ENCODE measurements at regions of chr10 and their contacts with region 1.

Region 1: DNA sequence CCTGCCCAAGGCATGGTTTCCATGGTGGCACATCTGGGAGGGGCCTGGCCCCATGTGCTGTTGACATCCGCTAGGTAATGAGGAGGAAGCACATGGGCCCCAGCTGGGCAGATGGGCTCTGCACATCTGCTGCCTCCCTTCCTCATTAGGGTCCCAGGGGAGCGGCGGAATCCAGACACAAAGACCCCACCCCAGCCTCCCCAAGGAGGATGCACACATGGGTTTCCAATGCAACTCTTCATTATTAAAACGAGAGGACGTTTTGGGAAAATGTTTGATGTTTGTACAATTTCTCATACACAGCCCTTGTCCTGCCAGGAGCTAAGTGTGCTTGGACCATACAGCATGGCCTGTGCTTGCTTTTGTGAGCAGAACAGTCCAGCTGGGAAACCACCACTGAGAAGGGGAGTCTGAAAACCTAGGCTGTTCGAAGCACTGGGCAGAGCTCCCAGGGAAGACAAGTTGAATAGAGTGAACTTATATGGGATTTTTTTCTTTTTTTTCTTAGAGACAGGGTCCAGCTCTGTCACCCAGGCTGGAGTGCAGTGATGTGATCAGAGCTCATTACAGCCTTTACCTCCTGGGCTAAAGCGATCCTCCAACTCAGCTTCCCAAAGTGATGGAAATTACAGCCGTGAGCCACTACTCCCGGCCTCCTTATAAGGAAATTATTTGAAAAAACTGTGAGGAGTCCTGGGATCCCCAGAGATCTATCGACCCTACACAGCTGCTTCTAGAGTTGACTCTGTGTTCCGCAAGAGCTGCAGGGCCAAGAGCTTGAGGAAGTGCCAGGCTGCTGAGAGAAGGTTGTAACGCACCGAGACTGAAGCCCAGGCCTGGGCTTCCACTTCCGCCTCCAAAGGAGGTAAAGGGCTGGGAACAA is 23.4 kb downstream of the FAM107B start:
- DNase-seq: peak; percentile 60
- ATAC-seq: peak; percentile 78
- H3K4me3 Mint-ChIP-seq: peak overlapping the region; percentile 70
- H3K27ac Mint-ChIP-seq: peak overlapping the region; percentile 97
- H3K4me1 Mint-ChIP-seq: peaks cover 71% of the 10 kb centered on the region
- H3K27me3 Mint-ChIP-seq: no peaks in the 10 kb centered on the region
- CTCF ChIP-seq: no peak

Region 2: GRCh38 chr10:14712991-14713497 is 38.2 kb before region 1 on chr10:
- CTCF ChIA-PET with region 1: no interaction called
- POLR2A ChIA-PET with region 1: no interaction called
- intact Hi-C with region 1: no loop called
- DNase-seq: no peak
- ATAC-seq: no peak
- H3K4me3 Mint-ChIP-seq: no peak overlapping the region
- H3K27ac Mint-ChIP-seq: no peak overlapping the region
- H3K4me1 Mint-ChIP-seq: no peaks in the 10 kb centered on the region
- H3K27me3 Mint-ChIP-seq: no peaks in the 10 kb centered on the region
- CTCF ChIP-seq: no peak

Region 3: GRCh38 chr10:14736600-14737081 is 14.6 kb before region 1 on chr10:
- CTCF ChIA-PET with region 1: interaction called, 3 read pairs
- POLR2A ChIA-PET with region 1: interaction called, 105 read pairs
- intact Hi-C with region 1: loop called (anchors 2 kb)
- DNase-seq: no peak
- ATAC-seq: peak; percentile 76
- H3K4me3 Mint-ChIP-seq: peak overlapping the region; percentile 73
- H3K27ac Mint-ChIP-seq: peak overlapping the region; percentile 98
- H3K4me1 Mint-ChIP-seq: peaks cover 76% of the 10 kb centered on the region
- H3K27me3 Mint-ChIP-seq: no peaks in the 10 kb centered on the region
- CTCF ChIP-seq: no peak

Region 4: DNA sequence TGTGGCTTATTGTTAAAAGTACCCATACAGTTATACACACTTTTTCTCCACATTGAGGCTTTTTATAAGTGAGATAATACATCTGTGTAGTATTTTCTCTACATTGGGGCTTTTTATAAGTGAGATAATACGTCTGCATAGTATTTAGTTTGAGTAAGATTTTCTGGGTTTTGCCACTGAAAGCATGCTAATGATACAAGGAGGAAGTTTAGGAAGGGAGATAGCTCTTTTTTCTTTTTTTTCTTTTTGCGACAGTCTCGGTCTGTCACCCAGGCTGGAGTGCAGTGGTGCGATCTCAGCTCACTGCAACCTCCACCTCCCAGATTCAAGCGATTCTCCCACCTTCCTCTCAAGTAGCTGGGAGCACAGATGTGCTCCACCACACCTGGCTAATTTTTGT is 10.1 kb after region 1 on chr10:
- CTCF ChIA-PET with region 1: no interaction called
- POLR2A ChIA-PET with region 1: interaction called, 13 read pairs
- intact Hi-C with region 1: no loop called
- DNase-seq: no peak
- ATAC-seq: peak; percentile 87
- H3K4me3 Mint-ChIP-seq: peak overlapping the region; percentile 64
- H3K27ac Mint-ChIP-seq: peak overlapping the region; percentile 67
- H3K4me1 Mint-ChIP-seq: peaks cover 37% of the 10 kb centered on the region
- H3K27me3 Mint-ChIP-seq: no peaks in the 10 kb centered on the region
- CTCF ChIP-seq: no peak

Region 5: GRCh38 chr10:14787938-14788337 is 36.7 kb after region 1 on chr10:
- CTCF ChIA-PET with region 1: no interaction called
- POLR2A ChIA-PET with region 1: no interaction called
- intact Hi-C with region 1: no loop called
- DNase-seq: no peak
- ATAC-seq: no peak
- H3K4me3 Mint-ChIP-seq: no peak overlapping the region
- H3K27ac Mint-ChIP-seq: no peak overlapping the region
- H3K4me1 Mint-ChIP-seq: peaks cover 2% of the 10 kb centered on the region
- H3K27me3 Mint-ChIP-seq: no peaks in the 10 kb centered on the region
- CTCF ChIP-seq: no peak

Region 6: DNA sequence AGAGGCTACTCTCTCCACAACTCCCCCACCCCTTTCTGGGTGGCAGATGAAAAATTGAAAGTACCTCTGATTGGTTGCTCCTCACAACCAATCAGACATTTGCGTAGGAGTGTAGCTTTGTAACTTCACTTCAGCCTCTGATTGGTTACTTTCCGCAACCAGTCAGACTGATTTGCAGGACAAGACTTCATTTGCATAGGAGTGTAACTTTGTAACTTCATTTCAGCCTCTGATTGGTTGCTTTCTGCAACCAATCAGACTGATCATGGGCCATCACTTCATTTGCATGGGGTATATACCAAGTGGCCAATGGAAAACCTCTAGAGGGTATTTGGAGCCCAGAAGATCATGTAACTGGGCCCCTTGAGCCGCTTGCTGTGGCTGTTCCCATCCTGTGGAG is 61.0 kb after region 1 on chr10:
- CTCF ChIA-PET with region 1: no interaction called
- POLR2A ChIA-PET with region 1: interaction called, 3 read pairs
- intact Hi-C with region 1: loop called (anchors 1 kb)
- DNase-seq: no peak
- ATAC-seq: no peak
- H3K4me3 Mint-ChIP-seq: no peak overlapping the region
- H3K27ac Mint-ChIP-seq: no peak overlapping the region
- H3K4me1 Mint-ChIP-seq: peaks cover 11% of the 10 kb centered on the region
- H3K27me3 Mint-ChIP-seq: no peaks in the 10 kb centered on the region
- CTCF ChIP-seq: no peak

Measured in activated B cell treated with CpG ODN at 0.5 μM for 24 hours (primary cell).